ENCODE measurements at regions of chr7 and their contacts with region 1.

Region 1: GRCh38 chr7:78134256-78134655 is 335.7 kb downstream of the PHTF2 start:
- DNase-seq: no peak
- ATAC-seq: peak; percentile 72
- H3K4me3 ChIP-seq: no peak overlapping the region
- H3K27ac ChIP-seq: no peak overlapping the region
- H3K4me1 ChIP-seq: no peaks in the 10 kb centered on the region
- H3K27me3 ChIP-seq: no peaks in the 10 kb centered on the region; a peak in 1 of 4 replicates
- CTCF ChIP-seq: peak; percentile 31 to 47 (median 37); a peak in 4 of 6 replicates
- EP300 ChIP-seq: no peak
- POLR2A ChIP-seq: no peak
- RAD21 ChIP-seq: peak; percentile 51; the same call in 1 of the 2 replicates

Region 2: GRCh38 chr7:78090616-78091015 is 43.6 kb before region 1 on chr7:
- CTCF ChIA-PET with region 1: interaction called, 5 read pairs
- POLR2A ChIA-PET with region 1: no interaction called
- RAD21 ChIA-PET with region 1: no interaction called
- SMC1A ChIA-PET with region 1: no interaction called
- in situ Hi-C with region 1: no loop called
- intact Hi-C with region 1: loop called (anchors 1 kb)
- DNase-seq: no peak
- ATAC-seq: no peak
- H3K4me3 ChIP-seq: no peak overlapping the region
- H3K27ac ChIP-seq: no peak overlapping the region
- H3K4me1 ChIP-seq: no peaks in the 10 kb centered on the region
- H3K27me3 ChIP-seq: no peaks in the 10 kb centered on the region; a peak in 3 of 4 replicates
- CTCF ChIP-seq: no peak
- EP300 ChIP-seq: no peak
- POLR2A ChIP-seq: no peak
- RAD21 ChIP-seq: no peak

Measured in GM12878 (cell line).